Motor neuron (in vitro differentiated cells): ENCODE measurements at regions of chr7 and their contacts with region 1.

Region 1: GRCh38 chr7:7424151-7424873 is 111.4 kb downstream of the COL28A1 start:
- ATAC-seq: peak; percentile 61 to 98 (median 80)
- H3K4me3 ChIP-seq: no peak overlapping the region
- H3K27ac ChIP-seq: no peak overlapping the region
- H3K4me1 ChIP-seq: no peaks in the 10 kb centered on the region

Region 2: GRCh38 chr7:7321720-7322128 is 102.6 kb before region 1 on chr7:
- in situ Hi-C with region 1: no loop called
- ATAC-seq: peak in 3 of 8 experiments; percentile 92 to 99 (median 99)
- H3K4me3 ChIP-seq: no peak overlapping the region
- H3K27ac ChIP-seq: no peak overlapping the region
- H3K4me1 ChIP-seq: no peaks in the 10 kb centered on the region

Region 3: DNA sequence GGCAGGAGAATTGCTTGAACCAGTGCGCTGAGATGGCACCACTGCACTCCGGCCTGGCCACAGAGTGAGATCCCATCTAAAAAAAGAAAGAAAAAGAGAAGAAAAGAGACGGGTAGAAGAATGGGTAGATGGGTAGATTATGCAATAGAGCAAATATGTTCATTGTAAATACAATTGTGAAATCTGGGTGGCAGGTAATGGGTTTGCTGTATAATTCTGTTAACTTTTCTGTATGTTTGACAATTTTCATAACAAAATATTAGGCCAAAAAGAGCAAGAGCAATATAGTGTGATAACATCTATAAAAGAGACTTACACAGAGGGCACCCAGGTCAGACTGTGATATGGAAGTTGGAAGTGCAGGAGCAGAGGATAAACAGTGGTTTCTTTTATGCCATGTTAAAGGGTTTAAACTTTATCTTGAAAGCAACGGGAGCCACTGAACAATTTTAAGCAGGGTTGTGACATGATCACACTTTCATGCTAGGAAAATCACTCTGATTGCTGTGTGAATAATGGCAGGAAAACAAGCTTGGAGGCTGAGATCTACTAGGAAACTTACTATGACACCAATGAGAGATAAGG is 118.0 kb after region 1 on chr7:
- in situ Hi-C with region 1: loop called in 3 of 9 experiments (anchors 10 to 25 kb)
- ATAC-seq: no peak
- H3K4me3 ChIP-seq: no peak overlapping the region
- H3K27ac ChIP-seq: no peak overlapping the region
- H3K4me1 ChIP-seq: no peaks in the 10 kb centered on the region

Region 4: DNA sequence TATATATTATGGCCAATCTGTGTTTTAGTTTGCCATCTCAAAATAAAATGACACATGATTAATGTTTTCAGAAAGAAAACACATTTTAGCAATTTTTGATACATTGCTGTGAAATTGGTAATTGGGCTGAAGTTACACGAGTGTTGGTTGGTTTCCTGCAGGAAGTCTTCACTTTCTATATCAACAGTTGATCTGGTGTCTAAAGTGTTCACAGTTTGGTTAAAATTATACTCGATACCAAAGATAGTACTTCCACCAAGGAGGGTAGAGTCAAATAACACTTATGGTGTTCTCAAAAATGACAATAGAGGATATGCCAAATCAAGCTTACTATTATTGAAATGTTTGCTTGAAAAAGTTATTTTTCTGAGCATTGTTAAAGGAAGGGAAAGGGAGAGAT is 423.9 kb after region 1 on chr7:
- in situ Hi-C with region 1: no loop called
- ATAC-seq: no peak
- H3K4me3 ChIP-seq: no peak overlapping the region
- H3K27ac ChIP-seq: no peak overlapping the region
- H3K4me1 ChIP-seq: no peaks in the 10 kb centered on the region